ENCODE measurements at regions of chr7 and their contacts with region 1.

Region 1: GRCh38 chr7:39465055-39465929 is 100.9 kb upstream of the YAE1 start:
- DNase-seq: peak; percentile 67
- CTCF ChIP-seq: peak; percentile 55

Region 2: GRCh38 chr7:38796626-38797501 is 668.4 kb before region 1 on chr7:
- in situ Hi-C with region 1: loop called (anchors 25 kb)
- DNase-seq: peak; percentile 13
- CTCF ChIP-seq: peak; percentile 51

Region 3: DNA sequence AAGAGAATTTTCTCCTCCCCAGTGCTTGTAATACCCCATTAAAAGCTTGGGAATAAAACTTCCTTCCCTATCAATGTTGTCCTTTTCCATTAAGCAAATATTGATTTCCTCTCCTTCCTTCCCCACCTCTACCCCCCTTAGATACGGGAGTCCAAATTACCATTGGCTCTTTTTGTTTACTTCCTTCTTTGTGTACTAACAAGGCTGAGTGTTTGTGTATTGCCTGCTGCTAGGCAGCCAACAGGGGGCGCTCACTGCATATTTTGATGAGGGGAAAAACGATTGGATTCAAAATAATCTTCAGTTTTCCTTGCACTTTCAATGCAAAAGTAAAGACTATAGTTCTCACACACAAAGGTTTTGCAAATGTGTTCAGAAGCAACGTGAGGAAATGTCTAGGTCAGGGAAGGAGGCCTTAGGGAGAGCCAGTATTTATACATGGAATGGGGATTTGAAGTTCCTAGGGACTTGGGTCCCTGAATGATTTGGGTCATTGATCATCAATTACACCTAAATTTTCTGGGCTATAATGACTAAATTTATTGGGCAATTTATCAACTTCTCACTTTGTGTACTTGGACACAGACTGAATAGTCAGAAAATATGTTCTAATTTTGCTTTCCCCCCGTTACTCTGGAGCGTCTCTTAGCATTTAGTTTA is 532.7 kb before region 1 on chr7:
- in situ Hi-C with region 1: loop called (anchors 25 kb)
- DNase-seq: peak; percentile 51
- CTCF ChIP-seq: peak; percentile 87

Region 4: DNA sequence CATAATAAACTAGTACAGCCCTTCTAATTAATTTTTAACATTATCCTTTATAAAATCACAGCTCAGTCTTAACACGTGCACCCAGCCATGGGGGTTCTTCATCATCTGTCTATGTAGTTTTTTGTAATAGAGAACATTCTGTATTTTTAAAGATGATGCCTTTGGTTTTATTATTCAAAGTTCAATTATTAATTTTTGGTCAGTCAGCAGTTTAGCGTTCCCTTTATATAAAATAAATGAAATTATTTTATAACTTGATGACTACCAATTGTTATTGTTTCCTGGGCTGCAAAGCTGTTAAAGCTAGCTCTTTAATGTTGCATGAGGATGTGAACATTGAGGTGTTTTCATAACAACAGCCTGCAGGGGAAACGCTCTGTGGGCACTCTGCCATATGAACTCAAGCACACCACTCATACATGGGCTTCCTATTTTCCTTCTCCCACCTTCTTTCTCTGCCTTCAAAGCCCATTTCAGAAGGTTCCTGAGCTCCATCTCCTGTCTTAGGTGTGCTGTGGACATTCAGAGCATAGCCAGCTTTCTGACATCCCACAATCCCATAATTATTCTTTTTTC is 71.1 kb before region 1 on chr7:
- in situ Hi-C with region 1: no loop called
- DNase-seq: no peak
- CTCF ChIP-seq: no peak